Heart right ventricle (tissue), 16 donors: ENCODE measurements at regions of chr7 and their contacts with region 1.

Region 1: GRCh38 chr7:112226701-112227276 is 20.3 kb downstream of the ZNF277 start:
- DNase-seq: no peak
- ATAC-seq: no peak
- H3K4me3 ChIP-seq: no peak overlapping the region
- H3K27ac ChIP-seq: no peak overlapping the region
- H3K4me1 ChIP-seq: peaks cover 0 to 41% (median 21%) of the 10 kb centered on the region in 9 donors
- H3K27me3 ChIP-seq: no peaks in the 10 kb centered on the region
- CTCF ChIP-seq: no peak

Region 2: GRCh38 chr7:112080978-112081377 is 145.8 kb before region 1 on chr7:
- intact Hi-C with region 1: no loop called
- DNase-seq: no peak
- ATAC-seq: peak in 7 of 8 donors; percentile 46 to 72 (median 67)
- H3K4me3 ChIP-seq: peak overlapping the region in 3 of 10 donors; percentile 0 to 11 (median 6)
- H3K27ac ChIP-seq: peak overlapping the region in 6 of 10 donors; percentile 23 to 90 (median 57)
- H3K4me1 ChIP-seq: peaks cover 0 to 73% (median 37%) of the 10 kb centered on the region in 9 donors
- H3K27me3 ChIP-seq: no peaks in the 10 kb centered on the region
- CTCF ChIP-seq: no peak

Region 3: DNA sequence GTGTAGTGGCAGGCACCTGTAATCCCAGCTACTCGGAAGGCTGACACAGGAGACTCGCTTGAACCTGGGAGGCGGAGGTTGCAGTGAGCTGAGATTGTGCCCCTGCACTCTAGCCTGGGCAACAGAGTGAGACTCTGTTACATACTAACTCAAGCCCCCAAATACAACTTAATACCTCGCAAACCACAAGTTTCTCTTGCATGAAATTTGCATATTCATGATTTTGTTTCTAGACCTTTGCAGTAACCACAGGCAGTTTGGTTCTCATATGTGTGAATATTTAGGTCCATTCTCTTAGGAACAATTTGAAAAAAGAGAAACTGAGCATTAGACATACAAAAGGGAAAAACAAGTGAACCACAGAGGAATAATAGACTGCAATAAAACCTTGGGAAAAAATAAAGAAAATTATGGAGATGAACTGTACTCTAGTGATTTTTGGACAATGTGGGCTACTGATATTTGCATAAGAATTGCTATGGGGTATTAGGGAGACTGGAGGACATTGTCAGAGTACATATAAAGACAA is 56.7 kb after region 1 on chr7:
- intact Hi-C with region 1: loop called in 1 of 10 experiments (anchors 5 kb)
- DNase-seq: no peak
- ATAC-seq: no peak
- H3K4me3 ChIP-seq: no peak overlapping the region
- H3K27ac ChIP-seq: no peak overlapping the region
- H3K4me1 ChIP-seq: peaks cover 0 to 8% (median 0%) of the 10 kb centered on the region in 9 donors
- H3K27me3 ChIP-seq: no peaks in the 10 kb centered on the region
- CTCF ChIP-seq: no peak

Region 4: GRCh38 chr7:112290065-112290464 is 63.3 kb after region 1 on chr7:
- intact Hi-C with region 1: loop called in 1 of 10 experiments (anchors 10 kb)
- DNase-seq: no peak
- ATAC-seq: no peak
- H3K4me3 ChIP-seq: no peak overlapping the region
- H3K27ac ChIP-seq: no peak overlapping the region
- H3K4me1 ChIP-seq: peaks cover 0 to 8% (median 0%) of the 10 kb centered on the region in 9 donors
- H3K27me3 ChIP-seq: no peaks in the 10 kb centered on the region
- CTCF ChIP-seq: no peak

Region 5: DNA sequence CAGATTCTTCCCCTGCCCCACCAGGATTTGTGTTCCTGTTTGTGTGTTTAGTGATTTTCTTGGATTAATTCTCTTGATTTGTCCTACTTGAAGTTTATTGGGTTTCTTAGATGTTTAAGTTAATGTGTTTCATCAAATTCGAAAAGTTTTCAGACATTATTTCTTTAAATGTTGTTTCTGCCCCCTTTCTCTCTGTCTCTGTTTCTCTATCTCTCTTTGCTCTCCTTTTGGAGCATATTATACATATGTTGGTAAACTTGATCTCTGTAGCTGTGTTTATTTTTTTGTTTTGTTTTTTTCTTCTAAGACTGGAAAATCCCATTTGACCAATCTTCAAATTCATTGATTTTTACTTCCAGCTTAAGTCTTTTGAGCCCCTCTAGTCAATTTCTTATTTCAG is 95.3 kb after region 1 on chr7:
- intact Hi-C with region 1: no loop called
- DNase-seq: no peak
- ATAC-seq: no peak
- H3K4me3 ChIP-seq: no peak overlapping the region
- H3K27ac ChIP-seq: no peak overlapping the region
- H3K4me1 ChIP-seq: no peaks in the 10 kb centered on the region
- H3K27me3 ChIP-seq: no peaks in the 10 kb centered on the region
- CTCF ChIP-seq: no peak

Region 6: GRCh38 chr7:112398534-112398933 is 171.7 kb after region 1 on chr7:
- intact Hi-C with region 1: no loop called
- DNase-seq: no peak
- ATAC-seq: no peak
- H3K4me3 ChIP-seq: no peak overlapping the region
- H3K27ac ChIP-seq: no peak overlapping the region
- H3K4me1 ChIP-seq: no peaks in the 10 kb centered on the region
- H3K27me3 ChIP-seq: peaks cover 0 to 9% (median 0%) of the 10 kb centered on the region in 7 donors
- CTCF ChIP-seq: no peak